ENCODE measurements at regions of chr2 and their contacts with region 1.

Region 1: GRCh38 chr2:128736689-128737545 is 418.2 kb upstream of the HS6ST1 start:
- DNase-seq: peak; percentile 85

Region 2: GRCh38 chr2:128486640-128487375 is 250.1 kb before region 1 on chr2:
- intact Hi-C with region 1: no loop called
- DNase-seq: no peak

Region 3: GRCh38 chr2:129248198-129248597 is 511.3 kb after region 1 on chr2:
- intact Hi-C with region 1: loop called (anchors 10 kb)
- DNase-seq: no peak

Region 4: DNA sequence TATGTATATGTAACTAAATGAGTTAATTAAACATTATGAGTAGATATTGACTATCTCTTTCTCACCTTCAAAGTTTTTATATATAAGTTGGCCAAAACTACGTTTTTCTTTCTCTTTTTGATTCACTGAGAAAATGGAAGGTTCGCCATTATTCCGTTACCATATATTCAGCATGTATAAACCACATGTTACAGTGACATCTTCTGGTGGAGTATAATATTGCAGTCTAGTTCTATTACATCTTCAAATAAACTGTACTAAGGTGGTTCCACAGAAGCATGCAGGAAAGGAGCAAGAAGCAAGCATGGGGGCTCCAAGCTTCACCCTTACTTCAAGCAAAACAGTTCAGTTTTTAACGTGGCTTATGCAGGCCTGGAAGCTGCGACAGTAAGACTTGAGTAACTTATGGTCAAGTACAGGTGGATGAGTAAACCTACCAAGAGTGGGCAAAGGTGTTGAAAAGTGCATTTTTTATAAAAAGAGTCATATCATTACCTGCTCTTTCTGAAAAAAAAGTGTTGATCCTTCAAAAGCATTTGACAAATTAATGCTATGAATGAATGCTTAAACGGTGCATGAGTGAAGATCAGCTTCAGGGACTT is 1112.7 kb after region 1 on chr2:
- intact Hi-C with region 1: loop called (anchors 10 kb)
- DNase-seq: no peak

Region 5: DNA sequence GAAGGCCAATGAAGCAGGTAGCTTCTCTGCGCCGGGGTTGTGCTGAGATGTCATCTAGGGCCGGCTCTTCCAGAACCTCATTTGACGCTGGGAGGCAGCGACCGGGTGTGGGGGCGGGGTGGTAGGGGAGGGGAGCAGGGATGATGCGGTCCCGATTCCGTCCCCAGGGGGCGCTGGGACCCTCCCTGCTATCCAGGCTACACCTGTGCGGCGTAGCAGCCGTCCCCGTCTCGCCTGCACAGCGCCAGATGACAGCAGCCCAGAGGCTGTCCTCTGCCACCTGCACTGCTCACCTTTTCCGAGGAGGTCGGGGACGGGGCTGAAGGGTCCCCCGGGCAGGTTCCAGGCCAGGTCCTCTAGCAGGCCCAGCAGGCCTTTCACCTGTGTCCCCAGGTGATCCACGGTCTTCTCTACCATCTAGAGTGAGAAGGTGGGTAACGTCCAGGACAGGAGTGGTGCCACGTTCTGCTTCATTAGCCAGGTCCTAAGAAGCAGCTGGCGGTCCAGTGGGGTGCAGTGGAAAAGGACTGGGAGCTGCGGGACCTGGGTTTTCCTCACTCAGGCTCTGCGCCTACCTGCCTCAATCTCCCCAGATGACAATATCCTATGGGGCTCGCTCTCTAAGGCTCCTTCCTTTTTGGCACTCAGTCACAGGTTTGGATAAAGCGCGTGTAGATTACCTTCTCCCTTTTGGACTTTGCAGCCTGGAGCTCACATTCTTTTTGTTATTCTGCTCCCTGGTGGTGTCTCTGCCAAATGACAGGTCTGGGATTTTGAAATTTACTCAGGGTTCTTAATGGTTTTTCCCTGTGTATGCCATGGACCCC is 1186.6 kb after region 1 on chr2:
- intact Hi-C with region 1: loop called (anchors 10 kb)
- DNase-seq: no peak